Tibial artery (tissue), 4 donors: ENCODE measurements at regions of chr5 and their contacts with region 1.

Region 1: DNA sequence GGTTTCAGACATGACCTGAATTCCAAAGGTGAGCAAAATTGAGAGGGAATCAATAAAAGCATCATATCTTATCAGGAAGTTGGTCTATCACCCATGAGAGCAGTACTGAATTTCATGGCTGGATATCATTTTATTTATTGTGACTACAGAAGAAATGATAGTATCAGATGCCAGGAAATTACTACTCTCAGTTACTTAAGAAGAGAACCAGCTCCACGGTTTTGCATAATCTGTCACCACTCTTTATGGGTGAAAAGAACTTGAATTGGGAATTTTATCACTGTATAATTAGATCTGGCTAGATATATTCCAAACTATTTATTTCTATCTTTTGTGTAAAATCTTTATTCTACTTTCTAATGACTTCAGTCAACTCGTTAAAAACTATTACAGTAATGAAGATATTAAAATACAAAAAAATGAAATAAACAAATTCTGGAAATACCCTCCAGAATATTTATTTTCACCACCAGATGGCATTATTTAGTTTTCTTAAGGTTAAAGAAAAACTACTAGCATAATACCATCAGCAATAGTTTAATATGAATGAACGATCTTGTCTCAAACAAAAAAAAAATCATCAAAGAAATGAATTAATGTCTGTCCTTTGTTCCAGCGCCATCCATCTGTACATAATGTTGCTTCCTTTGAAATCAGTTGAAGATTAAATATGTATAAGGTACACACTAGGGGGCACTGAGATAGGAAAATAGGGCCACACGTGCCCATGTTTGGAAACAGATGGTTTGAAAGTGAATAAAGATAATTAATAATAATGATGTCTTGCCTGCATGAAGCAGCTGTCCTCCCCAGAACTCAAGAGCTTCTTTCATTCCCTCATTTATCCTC is 84.7 kb upstream of the SLCO6A1 start:
- DNase-seq: no peak
- H3K4me3 ChIP-seq: no peak overlapping the region
- H3K27ac ChIP-seq: no peak overlapping the region
- H3K4me1 ChIP-seq: no peaks in the 10 kb centered on the region
- H3K27me3 ChIP-seq: no peaks in the 10 kb centered on the region
- CTCF ChIP-seq: peak; percentile 35 to 47

Region 2: DNA sequence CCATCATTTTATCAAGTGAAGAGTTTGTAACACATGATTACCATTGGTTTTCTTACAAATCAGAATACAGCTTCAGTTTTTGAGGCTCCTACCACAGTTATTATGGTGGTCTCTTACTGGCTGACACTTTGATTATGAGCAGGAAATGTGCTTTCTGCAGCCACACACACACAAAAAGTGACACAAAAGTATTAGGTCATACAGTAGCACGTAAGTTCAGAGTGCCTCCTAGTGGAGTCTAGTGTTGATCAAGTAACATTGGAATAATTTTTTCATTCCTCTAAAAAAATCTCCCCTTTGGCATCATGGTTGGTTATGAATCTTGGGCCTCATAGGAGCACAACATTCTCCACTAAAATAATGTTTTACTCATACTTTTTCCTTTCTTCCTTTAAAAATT is 209.2 kb after region 1 on chr5:
- intact Hi-C with region 1: no loop called
- DNase-seq: no peak
- H3K4me3 ChIP-seq: no peak overlapping the region
- H3K27ac ChIP-seq: no peak overlapping the region
- H3K4me1 ChIP-seq: peaks cover 0 to 68% (median 14%) of the 10 kb centered on the region in 4 donors
- H3K27me3 ChIP-seq: no peaks in the 10 kb centered on the region
- CTCF ChIP-seq: no peak

Region 3: DNA sequence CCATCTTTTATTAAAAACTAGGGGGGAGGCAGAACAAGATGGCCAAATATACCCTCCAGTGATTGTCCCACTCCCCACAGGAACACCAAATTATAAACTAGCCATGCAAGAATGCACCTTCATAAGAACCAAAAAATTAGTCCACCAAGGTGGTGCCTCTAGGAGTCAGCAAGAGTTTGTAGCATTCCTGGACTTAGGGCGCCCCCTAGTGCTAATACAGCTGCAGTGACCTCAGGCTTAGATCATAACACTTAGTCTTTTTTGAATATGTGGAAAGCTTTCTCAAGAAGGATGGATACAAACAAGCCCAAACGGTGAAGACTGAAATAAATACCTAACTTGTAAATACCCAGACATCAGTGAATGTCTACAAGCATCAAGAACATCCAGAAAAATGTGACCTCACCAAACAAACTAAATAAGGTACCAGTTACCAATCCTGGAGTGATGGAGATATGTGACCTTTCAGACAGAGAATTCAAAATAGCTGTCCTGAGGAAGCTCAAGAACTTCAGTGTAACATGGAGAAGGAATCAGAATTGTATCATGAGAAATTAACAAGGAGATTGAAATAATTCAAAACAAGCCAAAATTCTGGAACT is 555.9 kb after region 1 on chr5:
- intact Hi-C with region 1: loop called (anchors 10 kb)
- DNase-seq: peak; percentile 76 to 80
- H3K4me3 ChIP-seq: no peak overlapping the region
- H3K27ac ChIP-seq: no peak overlapping the region
- H3K4me1 ChIP-seq: no peaks in the 10 kb centered on the region
- H3K27me3 ChIP-seq: no peaks in the 10 kb centered on the region
- CTCF ChIP-seq: peak; percentile 86 to 90